ENCODE measurements at regions of chr6 and their contacts with region 1.

Region 1: DNA sequence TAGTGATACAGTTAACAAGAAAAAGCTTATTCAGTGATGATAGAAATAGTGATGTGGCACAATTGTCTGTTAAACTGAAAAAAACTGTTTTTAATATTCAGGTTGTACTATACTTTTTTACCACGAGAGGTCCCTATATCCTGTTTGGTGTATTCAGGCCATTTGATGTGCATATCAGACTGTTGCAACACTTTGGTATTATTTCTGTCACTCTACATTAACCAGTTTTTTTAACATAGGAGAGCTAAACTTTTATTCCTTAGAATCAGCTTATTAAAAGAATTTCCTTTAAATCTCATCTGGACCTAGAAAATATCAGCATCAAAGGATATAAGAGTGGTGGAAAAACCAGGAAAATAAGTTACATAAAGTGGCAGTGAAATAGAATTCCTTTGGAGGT is 36.8 kb downstream of the TSPYL4 start:
- DNase-seq: no peak
- H3K4me3 ChIP-seq: no peak overlapping the region
- H3K27ac ChIP-seq: peak overlapping the region; percentile 0 to 34; a peak in 1 of 4 replicates
- H3K4me1 ChIP-seq: peaks cover 3 to 9% of the 10 kb centered on the region in 2 experiments; a peak in 2 of 4 replicates
- H3K27me3 ChIP-seq: no peaks in the 10 kb centered on the region
- CTCF ChIP-seq: peak; percentile 70
- EP300 ChIP-seq: no peak
- RAD21 ChIP-seq: peak; percentile 58

Region 2: GRCh38 chr6:116206231-116206903 is 10.7 kb before region 1 on chr6:
- CTCF ChIA-PET with region 1: interaction called, 36 read pairs
- POLR2A ChIA-PET with region 1: no interaction called
- DNase-seq: no peak
- H3K4me3 ChIP-seq: no peak overlapping the region
- H3K27ac ChIP-seq: peak overlapping the region in 1 of 2 experiments; percentile 68; a peak in 2 of 4 replicates
- H3K4me1 ChIP-seq: peaks cover 5 to 31% of the 10 kb centered on the region in 2 experiments; a peak in 2 of 4 replicates
- H3K27me3 ChIP-seq: no peaks in the 10 kb centered on the region
- CTCF ChIP-seq: no peak
- EP300 ChIP-seq: peak in 1 of 2 experiments; percentile 65; a peak in 1 of 4 replicates
- RAD21 ChIP-seq: no peak

Region 3: GRCh38 chr6:116229287-116229913 is 12.3 kb after region 1 on chr6:
- CTCF ChIA-PET with region 1: interaction called, 41 read pairs
- POLR2A ChIA-PET with region 1: interaction called, 10 read pairs
- DNase-seq: peak; percentile 84
- H3K4me3 ChIP-seq: peak overlapping the region; percentile 64 to 71
- H3K27ac ChIP-seq: peak overlapping the region; percentile 71 to 89
- H3K4me1 ChIP-seq: peaks cover 3 to 10% of the 10 kb centered on the region in 2 experiments; a peak in 2 of 4 replicates
- H3K27me3 ChIP-seq: no peaks in the 10 kb centered on the region
- CTCF ChIP-seq: no peak
- EP300 ChIP-seq: 0 out of 4 replicates have a peak, but pooled peaks of 1 of the 2 experiments have one; percentile 15
- RAD21 ChIP-seq: no peak

Region 4: DNA sequence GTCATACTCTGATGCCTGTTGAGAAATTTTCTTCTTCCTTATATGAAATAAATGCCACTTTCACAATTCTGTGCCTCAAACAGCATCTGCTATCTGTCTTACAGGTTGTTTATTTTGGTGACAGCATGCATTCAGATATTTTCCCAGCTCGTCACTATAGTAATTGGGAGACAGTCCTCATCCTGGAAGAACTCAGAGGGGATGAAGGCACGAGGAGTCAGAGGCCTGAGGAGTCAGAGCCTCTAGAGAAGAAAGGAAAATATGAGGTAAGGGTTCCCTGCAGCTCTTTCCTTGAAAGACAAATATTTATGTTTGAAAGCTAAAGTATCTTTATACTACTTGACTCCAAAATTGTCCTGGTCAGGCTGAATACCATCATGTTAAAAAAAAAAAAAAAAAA is 21.0 kb after region 1 on chr6:
- CTCF ChIA-PET with region 1: interaction called, 11 read pairs
- POLR2A ChIA-PET with region 1: no interaction called
- DNase-seq: no peak
- H3K4me3 ChIP-seq: no peak overlapping the region
- H3K27ac ChIP-seq: no peak overlapping the region
- H3K4me1 ChIP-seq: no peaks in the 10 kb centered on the region
- H3K27me3 ChIP-seq: no peaks in the 10 kb centered on the region
- CTCF ChIP-seq: no peak
- EP300 ChIP-seq: no peak
- RAD21 ChIP-seq: no peak

Region 5: GRCh38 chr6:116253505-116254296 is 36.6 kb after region 1 on chr6 and contains the start of gene TSPYL4:
- CTCF ChIA-PET with region 1: interaction called, 52 read pairs
- POLR2A ChIA-PET with region 1: interaction called, 5 read pairs
- DNase-seq: peak; percentile 91
- H3K4me3 ChIP-seq: peak within 1 kb of the TSS; percentile 92 to 99
- H3K27ac ChIP-seq: peak within 1 kb of the TSS; percentile 92 to 97
- H3K4me1 ChIP-seq: peaks cover 19 to 32% of the 10 kb centered on the region in 2 experiments; a peak in 3 of 4 replicates
- H3K27me3 ChIP-seq: no peaks in the 10 kb centered on the region
- CTCF ChIP-seq: no peak
- EP300 ChIP-seq: peak in 1 of 2 experiments; percentile 43; a peak in 1 of 4 replicates
- RAD21 ChIP-seq: no peak
- polyA plus RNA-seq, gene TSPYL4: 29.1 and 44.5 TPM in 2 replicates

Region 6: DNA sequence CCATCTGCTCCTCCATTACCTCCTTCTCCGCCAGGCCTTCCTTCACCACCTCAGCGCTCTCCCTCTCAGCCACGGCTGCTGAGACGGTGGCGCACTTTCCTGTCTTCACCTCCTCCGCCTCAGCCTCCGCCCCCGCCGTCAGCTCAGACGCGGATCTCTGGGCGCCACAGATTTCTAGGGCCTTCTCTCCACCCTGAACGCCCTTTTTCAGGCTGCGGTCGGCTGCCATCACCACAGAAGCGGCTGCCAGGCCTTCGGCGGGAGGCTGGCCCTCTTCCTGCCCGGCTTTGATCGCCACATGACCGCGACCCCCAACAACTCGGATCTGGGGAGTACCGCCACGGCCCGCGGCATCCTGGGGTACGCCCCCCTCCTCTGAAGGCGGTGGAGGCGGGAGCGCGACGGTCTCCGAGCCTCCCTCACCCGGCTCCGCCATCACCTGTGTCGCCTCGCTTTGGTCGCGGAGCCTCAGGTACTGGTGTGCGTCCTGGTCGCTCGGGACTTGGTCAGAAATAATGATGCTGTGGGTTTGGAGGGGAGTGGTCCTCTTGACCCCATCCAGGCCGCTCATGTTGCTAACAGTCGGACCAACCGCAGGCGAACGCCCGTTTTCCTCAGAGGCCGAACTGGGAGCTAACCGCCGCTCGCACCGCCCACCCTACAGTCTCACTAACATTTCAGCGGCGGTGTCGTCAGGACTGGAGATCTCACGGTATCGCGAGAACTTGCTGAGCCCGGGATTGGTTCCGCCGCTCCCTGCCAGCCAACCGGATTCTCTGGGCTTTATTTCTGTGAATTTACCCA is 62.4 kb after region 1 on chr6 and contains the start of gene TSPYL1:
- CTCF ChIA-PET with region 1: interaction called, 23 read pairs
- POLR2A ChIA-PET with region 1: no interaction called
- DNase-seq: peak; percentile 91
- H3K4me3 ChIP-seq: peak within 1 kb of the TSS; percentile 62 to 82
- H3K27ac ChIP-seq: peak within 1 kb of the TSS; percentile 94 to 98
- H3K4me1 ChIP-seq: peaks cover 4 to 20% of the 10 kb centered on the region in 2 experiments; a peak in 2 of 4 replicates
- H3K27me3 ChIP-seq: no peaks in the 10 kb centered on the region
- CTCF ChIP-seq: peak; percentile 28
- EP300 ChIP-seq: peak in 1 of 2 experiments; percentile 72; a peak in 2 of 4 replicates
- RAD21 ChIP-seq: no peak
- polyA plus RNA-seq, gene TSPYL1: 27.9 and 31.7 TPM in 2 replicates

Region 7: GRCh38 chr6:116561377-116562018 is 344.4 kb after region 1 on chr6:
- CTCF ChIA-PET with region 1: interaction called, 29 read pairs
- POLR2A ChIA-PET with region 1: no interaction called
- DNase-seq: peak; percentile 70
- H3K4me3 ChIP-seq: no peak overlapping the region; a peak in 1 of 4 replicates
- H3K27ac ChIP-seq: no peak overlapping the region
- H3K4me1 ChIP-seq: peaks cover 2 to 23% of the 10 kb centered on the region in 2 experiments; a peak in 3 of 4 replicates
- H3K27me3 ChIP-seq: no peaks in the 10 kb centered on the region
- CTCF ChIP-seq: peak; percentile 94
- EP300 ChIP-seq: no peak
- RAD21 ChIP-seq: peak; percentile 93

Region 8: DNA sequence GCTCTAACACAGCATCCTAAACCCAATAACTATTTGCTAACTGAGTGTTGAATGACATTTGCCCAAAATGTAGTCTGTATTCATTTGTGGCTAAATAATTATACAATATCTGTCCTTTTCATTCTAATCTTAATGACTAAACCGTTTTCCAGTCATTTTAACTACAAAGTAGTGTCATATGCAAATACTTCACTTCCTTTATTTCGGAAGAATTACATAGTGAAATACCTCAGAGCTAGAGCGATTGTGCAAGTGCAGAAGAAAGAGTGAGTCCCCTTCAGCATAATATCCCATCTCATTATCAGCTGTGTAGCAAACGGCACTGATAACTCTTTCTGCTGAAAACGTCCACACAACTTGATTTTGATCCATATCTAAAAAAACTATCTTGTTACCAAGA is 1142.5 kb after region 1 on chr6:
- CTCF ChIA-PET with region 1: no interaction called
- POLR2A ChIA-PET with region 1: no interaction called
- DNase-seq: no peak
- H3K4me3 ChIP-seq: no peak overlapping the region
- H3K27ac ChIP-seq: no peak overlapping the region
- H3K4me1 ChIP-seq: no peaks in the 10 kb centered on the region
- H3K27me3 ChIP-seq: no peaks in the 10 kb centered on the region
- CTCF ChIP-seq: no peak
- EP300 ChIP-seq: no peak
- RAD21 ChIP-seq: no peak

Measured in SK-N-SH (cell line).